ENCODE measurements at regions of chr22 and their contacts with region 1.

Region 1: DNA sequence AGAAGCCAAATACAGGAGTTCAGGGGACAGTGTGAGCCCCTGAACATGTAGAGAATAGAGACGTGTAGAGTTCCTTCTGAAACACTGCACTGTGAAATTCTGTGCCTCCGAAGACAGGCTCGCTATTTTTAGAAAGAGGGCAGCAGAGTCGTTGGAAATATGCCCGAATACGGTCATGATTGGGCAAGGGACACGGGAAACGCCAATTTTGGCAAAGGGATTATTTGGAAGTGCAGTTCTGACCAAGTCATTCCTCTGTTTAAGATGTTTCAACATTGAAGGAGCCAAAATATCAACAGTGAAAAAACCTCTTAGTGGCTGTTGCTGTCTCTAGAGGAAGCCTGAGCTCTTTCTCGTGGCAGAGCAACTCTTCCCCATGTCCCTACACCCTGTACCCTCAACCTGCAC is 9.5 kb upstream of the CBX6 start:
- DNase-seq: peak; percentile 90
- H3K4me3 ChIP-seq: peak overlapping the region in 2 of 4 donors; percentile 0 to 28
- H3K27ac ChIP-seq: peak overlapping the region; percentile 89 to 91 (median 90)
- H3K4me1 ChIP-seq: peaks cover 0 to 33% (median 27%) of the 10 kb centered on the region in 4 donors
- H3K27me3 ChIP-seq: no peaks in the 10 kb centered on the region
- CTCF ChIP-seq: no peak
- EP300 ChIP-seq: peak in 1 of 4 donors; percentile 16
- POLR2A ChIP-seq: no peak

Region 2: GRCh38 chr22:38850941-38851849 is 30.3 kb before region 1 on chr22:
- intact Hi-C with region 1: no loop called
- DNase-seq: no peak
- H3K4me3 ChIP-seq: no peak overlapping the region
- H3K27ac ChIP-seq: no peak overlapping the region
- H3K4me1 ChIP-seq: no peaks in the 10 kb centered on the region
- H3K27me3 ChIP-seq: no peaks in the 10 kb centered on the region
- CTCF ChIP-seq: no peak
- EP300 ChIP-seq: no peak
- POLR2A ChIP-seq: no peak

Region 3: GRCh38 chr22:38927033-38927781 is 45.7 kb after region 1 on chr22:
- intact Hi-C with region 1: loop called (anchors 2 kb)
- DNase-seq: peak; percentile 89
- H3K4me3 ChIP-seq: peak overlapping the region; percentile 17 to 53 (median 44)
- H3K27ac ChIP-seq: peak overlapping the region; percentile 66 to 90 (median 77)
- H3K4me1 ChIP-seq: peaks cover 0 to 33% (median 28%) of the 10 kb centered on the region in 4 donors
- H3K27me3 ChIP-seq: no peaks in the 10 kb centered on the region
- CTCF ChIP-seq: peak; percentile 55 to 81 (median 62)
- EP300 ChIP-seq: no peak
- POLR2A ChIP-seq: no peak

Measured in sigmoid colon (tissue), 7 donors.